Left lung (tissue), 14 donors: ENCODE measurements at regions of chr11 and their contacts with region 1.

Region 1: GRCh38 chr11:14907411-14908213 is 15.6 kb upstream of the CYP2R1 start:
- DNase-seq: peak; percentile 41 to 95 (median 74)
- ATAC-seq: peak; percentile 85
- H3K4me3 ChIP-seq: no peak overlapping the region
- H3K27ac ChIP-seq: no peak overlapping the region
- H3K4me1 ChIP-seq: peaks cover 0 to 28% of the 10 kb centered on the region in 2 donors
- H3K27me3 ChIP-seq: no peaks in the 10 kb centered on the region
- CTCF ChIP-seq: peak; percentile 78 to 89

Region 2: GRCh38 chr11:14522801-14523200 is 384.8 kb before region 1 on chr11:
- intact Hi-C with region 1: no loop called
- DNase-seq: no peak
- ATAC-seq: no peak
- H3K4me3 ChIP-seq: no peak overlapping the region
- H3K27ac ChIP-seq: no peak overlapping the region
- H3K4me1 ChIP-seq: peaks cover 0 to 21% of the 10 kb centered on the region in 2 donors
- H3K27me3 ChIP-seq: no peaks in the 10 kb centered on the region
- CTCF ChIP-seq: no peak

Region 3: GRCh38 chr11:14537134-14537599 is 370.4 kb before region 1 on chr11:
- intact Hi-C with region 1: loop called in 1 of 2 experiments (anchors 10 kb)
- DNase-seq: peak in 2 of 4 donors; percentile 32 to 48
- ATAC-seq: peak; percentile 73
- H3K4me3 ChIP-seq: no peak overlapping the region
- H3K27ac ChIP-seq: peak overlapping the region in 1 of 2 donors; percentile 42
- H3K4me1 ChIP-seq: peaks cover 0 to 50% of the 10 kb centered on the region in 2 donors
- H3K27me3 ChIP-seq: no peaks in the 10 kb centered on the region
- CTCF ChIP-seq: peak; percentile 74 to 83

Region 4: DNA sequence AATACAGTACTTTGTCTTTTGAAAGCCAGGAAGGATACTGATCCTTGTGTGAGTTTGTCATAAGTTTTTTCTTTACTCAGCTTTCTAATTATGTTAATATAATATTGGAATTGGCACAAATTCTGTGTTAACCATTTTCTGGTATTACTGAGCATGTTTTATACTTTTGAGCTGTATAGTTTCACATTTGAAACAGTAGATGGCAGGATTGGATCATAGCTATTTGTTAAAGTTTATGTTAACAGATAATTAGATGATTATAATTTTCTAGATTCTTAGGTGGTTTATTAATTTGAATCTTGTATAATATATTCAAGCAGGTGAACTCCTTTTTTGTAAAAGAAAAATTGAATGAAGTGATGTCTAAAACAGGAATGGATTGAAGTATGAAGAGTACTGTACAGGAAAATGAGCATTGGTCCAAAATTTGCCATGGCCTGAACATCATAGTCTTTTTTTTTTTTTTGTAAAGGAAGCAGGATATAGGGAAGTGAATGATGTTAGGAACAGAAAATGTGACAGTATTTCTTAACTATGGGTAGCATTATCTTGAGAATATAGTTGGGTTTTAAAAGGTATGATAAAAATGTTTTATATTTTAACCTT is 117.6 kb before region 1 on chr11:
- intact Hi-C with region 1: loop called in 1 of 2 experiments (anchors 5 kb)
- DNase-seq: no peak
- ATAC-seq: peak; percentile 33
- H3K4me3 ChIP-seq: no peak overlapping the region
- H3K27ac ChIP-seq: no peak overlapping the region
- H3K4me1 ChIP-seq: no peaks in the 10 kb centered on the region
- H3K27me3 ChIP-seq: no peaks in the 10 kb centered on the region
- CTCF ChIP-seq: peak; percentile 25 to 40

Region 5: DNA sequence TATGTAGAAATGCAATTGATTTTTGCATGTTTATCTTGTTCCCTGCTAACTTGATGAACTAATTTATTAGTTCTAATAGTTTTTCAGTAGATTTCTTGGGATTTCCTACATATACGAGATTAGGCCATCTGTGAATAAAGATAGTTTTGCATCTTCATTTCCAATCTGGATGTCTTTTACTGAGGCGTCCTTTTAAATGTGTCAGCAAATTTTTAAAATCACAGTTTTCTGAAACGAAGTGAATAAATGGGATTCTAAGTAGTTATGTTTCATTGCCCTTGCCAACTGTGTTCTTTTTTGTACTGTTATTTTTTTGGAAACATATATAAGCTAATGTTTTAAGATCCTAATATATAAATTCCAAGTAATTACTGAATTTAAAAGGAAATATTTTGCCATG is 65.6 kb before region 1 on chr11:
- intact Hi-C with region 1: no loop called
- DNase-seq: no peak
- ATAC-seq: no peak
- H3K4me3 ChIP-seq: no peak overlapping the region
- H3K27ac ChIP-seq: no peak overlapping the region
- H3K4me1 ChIP-seq: no peaks in the 10 kb centered on the region
- H3K27me3 ChIP-seq: no peaks in the 10 kb centered on the region
- CTCF ChIP-seq: no peak

Region 6: DNA sequence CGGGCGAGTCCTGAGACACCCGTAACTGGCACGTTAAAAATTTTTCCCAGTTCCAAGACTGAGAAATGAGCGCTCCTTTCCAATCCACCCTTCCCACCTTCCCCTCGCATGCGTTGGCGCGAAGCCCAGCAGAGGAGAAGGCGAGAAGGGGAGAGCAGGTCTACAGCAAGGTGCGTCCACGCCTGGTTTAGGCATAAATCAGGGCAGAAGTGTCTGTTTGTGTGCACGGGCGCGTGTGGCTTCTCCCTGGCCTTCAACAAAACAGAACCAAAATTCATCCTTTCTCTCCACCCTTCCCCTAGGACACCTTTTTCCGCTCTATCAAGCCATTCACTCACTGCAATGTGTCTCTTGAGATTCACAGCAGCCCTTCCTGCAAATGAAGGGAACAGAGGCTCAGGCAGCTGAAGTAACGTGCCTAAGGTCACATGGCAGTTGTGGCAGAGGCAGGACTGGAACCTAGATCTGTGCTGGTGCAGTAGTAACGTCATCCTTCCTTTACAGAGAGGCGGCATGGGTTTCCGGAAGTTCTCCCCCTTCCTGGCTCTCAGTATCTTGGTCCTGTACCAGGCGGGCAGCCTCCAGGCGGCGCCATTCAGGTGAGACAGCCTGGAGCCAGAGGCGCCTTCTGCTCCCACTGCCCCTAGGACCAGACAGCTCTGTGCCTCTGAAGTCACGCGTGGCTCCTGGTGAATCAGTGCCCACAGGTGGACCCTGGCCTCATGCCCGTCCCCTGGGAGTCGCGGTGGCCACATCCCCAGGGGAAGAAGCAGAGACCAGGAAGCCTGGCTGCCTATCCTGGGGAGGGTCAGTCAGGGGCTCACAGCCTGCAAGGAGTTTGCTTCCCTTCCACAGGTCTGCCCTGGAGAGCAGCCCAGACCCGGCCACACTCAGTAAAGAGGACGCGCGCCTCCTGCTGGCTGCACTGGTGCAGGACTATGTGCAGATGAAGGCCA is 166.9 kb after region 1 on chr11:
- intact Hi-C with region 1: loop called in 1 of 2 experiments (anchors 10 kb)
- DNase-seq: peak; percentile 67 to 91 (median 80)
- ATAC-seq: peak; percentile 96
- H3K4me3 ChIP-seq: peak overlapping the region in 1 of 2 donors; percentile 13
- H3K27ac ChIP-seq: no peak overlapping the region
- H3K4me1 ChIP-seq: peaks cover 16 to 18% of the 10 kb centered on the region in 2 donors
- H3K27me3 ChIP-seq: peaks cover 19 to 53% of the 10 kb centered on the region in 2 donors
- CTCF ChIP-seq: peak; percentile 71 to 79

Region 7: DNA sequence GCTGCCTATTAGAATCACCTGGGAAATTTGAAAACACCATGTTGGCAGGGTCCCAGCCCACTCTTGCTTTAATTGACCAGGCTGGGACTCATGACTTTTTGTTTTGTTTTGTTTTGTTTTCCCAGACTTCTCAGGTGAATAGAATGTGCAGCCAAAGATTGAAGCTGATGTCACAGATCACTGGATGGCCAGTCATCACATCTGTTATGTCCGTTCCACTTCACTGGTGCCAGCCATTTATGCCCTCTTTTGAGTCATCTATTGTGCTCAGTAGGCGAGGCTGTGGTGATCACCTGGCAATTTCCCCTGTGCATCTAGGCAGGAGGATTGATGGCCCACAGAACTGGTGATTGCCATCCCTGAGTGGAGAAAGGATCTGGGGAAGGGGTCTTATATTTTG is 504.4 kb after region 1 on chr11:
- intact Hi-C with region 1: no loop called
- DNase-seq: no peak
- ATAC-seq: no peak
- H3K4me3 ChIP-seq: no peak overlapping the region
- H3K27ac ChIP-seq: no peak overlapping the region
- H3K4me1 ChIP-seq: no peaks in the 10 kb centered on the region
- H3K27me3 ChIP-seq: no peaks in the 10 kb centered on the region
- CTCF ChIP-seq: no peak